SK-N-SH (cell line): ENCODE measurements at regions of chr5 and their contacts with region 1.

Region 1: DNA sequence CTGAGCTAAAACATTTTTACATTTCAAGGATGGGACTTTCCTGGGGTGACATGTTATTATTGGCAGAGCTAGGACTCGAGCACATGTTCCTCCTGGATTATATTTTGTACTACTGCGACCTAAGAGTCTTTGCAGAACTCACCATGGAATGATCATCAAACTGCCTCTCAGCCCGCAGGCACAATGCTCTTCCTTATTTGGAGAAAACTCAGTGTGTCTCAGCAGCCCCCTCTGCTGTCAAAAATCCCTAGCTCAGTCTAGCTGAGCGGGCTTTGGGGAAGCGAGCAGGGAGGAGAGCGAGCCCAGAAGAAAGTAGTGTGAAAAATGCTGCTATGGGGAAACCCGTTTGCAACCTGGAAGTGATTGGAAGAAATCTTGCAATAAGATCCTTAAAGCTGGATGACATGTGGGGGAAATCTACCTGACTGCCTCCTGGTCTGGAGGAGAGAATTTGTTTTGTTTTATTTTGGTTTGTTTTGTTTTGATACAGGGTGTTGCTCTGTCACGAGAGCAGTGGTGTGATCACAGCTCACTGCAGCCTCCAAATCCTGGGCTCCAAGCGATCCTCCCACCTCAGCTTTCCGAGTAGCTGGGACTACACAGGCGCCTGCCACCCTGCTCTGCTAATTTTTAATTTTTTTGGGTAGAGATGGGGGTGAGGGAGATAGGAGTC is 89.9 kb upstream of the CLINT1 start:
- DNase-seq: peak; percentile 77
- H3K4me3 ChIP-seq: peak overlapping the region in 1 of 2 experiments; percentile 1; a peak in 1 of 4 replicates
- H3K27ac ChIP-seq: no peak overlapping the region
- H3K4me1 ChIP-seq: no peaks in the 10 kb centered on the region; a peak in 1 of 4 replicates
- H3K27me3 ChIP-seq: no peaks in the 10 kb centered on the region
- CTCF ChIP-seq: peak; percentile 91
- EP300 ChIP-seq: no peak
- RAD21 ChIP-seq: peak; percentile 83

Region 2: DNA sequence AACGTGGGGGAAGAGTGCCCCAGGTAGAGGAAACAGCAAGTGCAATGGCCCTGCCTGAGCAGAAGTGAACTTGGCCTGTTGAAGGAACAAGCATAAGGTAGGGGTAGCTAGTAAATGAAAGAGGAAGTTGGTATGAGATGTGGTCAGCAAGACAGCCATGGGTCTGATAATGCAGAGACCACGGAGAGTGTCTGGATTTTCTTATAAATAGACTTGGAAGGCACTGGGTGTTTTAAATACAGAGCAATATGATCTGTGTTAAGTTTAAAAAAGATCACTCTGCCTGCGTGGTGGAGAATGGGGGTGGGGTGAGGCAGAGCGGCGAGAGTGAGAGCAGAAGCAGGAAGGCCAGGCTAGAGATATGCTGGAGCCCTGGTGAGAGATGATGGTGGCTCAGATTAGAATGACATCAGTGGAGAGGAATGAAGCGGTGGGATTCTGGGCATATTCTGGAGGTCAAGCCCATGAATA is 377.5 kb before region 1 on chr5:
- CTCF ChIA-PET with region 1: no interaction called
- POLR2A ChIA-PET with region 1: no interaction called
- DNase-seq: no peak
- H3K4me3 ChIP-seq: 0 out of 4 replicates have a peak overlapping the region, but pooled peaks of 1 of the 2 experiments have one; percentile 35
- H3K27ac ChIP-seq: peak overlapping the region; percentile 51 to 93
- H3K4me1 ChIP-seq: peaks cover 6 to 9% of the 10 kb centered on the region in 2 experiments; a peak in 3 of 4 replicates
- H3K27me3 ChIP-seq: no peaks in the 10 kb centered on the region
- CTCF ChIP-seq: no peak
- EP300 ChIP-seq: peak in 1 of 2 experiments; percentile 82; a peak in 1 of 4 replicates
- RAD21 ChIP-seq: no peak

Region 3: DNA sequence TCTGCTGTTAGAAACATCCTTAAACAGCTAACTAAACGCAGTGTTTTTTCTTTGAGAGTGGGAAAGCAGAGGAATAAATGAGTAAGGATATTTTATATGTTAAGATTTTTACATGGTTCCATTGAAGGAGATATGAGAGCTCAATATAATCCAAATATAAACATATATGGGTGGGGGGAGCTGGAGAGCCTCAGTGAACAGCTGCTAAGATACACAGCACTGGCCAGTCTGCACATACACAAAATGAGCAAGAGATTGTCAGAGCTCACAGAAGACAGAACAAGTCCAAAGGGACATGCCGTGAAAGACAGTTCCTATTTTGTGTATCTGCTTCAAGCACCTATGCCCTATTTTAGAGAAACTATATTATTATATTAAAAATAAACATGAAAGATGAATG is 136.8 kb before region 1 on chr5:
- CTCF ChIA-PET with region 1: interaction called, 22 read pairs
- POLR2A ChIA-PET with region 1: no interaction called
- DNase-seq: no peak
- H3K4me3 ChIP-seq: no peak overlapping the region
- H3K27ac ChIP-seq: no peak overlapping the region
- H3K4me1 ChIP-seq: no peaks in the 10 kb centered on the region; a peak in 2 of 4 replicates
- H3K27me3 ChIP-seq: no peaks in the 10 kb centered on the region
- CTCF ChIP-seq: no peak
- EP300 ChIP-seq: no peak
- RAD21 ChIP-seq: no peak

Region 4: DNA sequence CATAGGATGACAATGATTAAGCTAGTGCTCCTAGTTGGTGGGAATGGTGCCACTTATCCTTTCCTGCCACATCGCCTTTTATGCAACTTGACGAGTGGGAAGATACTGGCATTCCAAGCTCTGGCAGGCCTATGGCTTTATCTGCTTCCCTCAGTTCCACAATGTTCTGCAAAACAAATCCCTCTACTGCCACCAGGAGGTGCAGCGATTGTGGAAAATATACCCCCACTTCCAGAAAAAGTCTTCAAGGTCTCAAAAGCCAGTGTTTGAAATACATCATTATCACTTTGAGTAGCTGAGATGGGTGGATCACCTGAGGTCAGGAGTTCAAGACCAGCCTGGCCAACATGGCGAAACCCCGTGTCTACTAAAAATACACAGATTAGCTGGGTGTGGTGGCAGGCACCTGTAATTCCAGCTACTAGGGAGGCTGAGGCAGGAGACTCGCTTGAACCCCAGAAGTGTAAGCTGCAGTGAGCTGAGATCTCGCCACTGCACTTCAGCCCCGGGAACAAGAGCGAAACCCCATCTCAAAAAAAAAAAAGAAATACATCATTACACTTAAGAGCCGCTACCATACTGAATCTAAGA is 93.4 kb before region 1 on chr5:
- CTCF ChIA-PET with region 1: interaction called, 81 read pairs
- POLR2A ChIA-PET with region 1: no interaction called
- DNase-seq: peak; percentile 70
- H3K4me3 ChIP-seq: no peak overlapping the region
- H3K27ac ChIP-seq: no peak overlapping the region
- H3K4me1 ChIP-seq: peaks cover 0 to 8% of the 10 kb centered on the region in 2 experiments; a peak in 2 of 4 replicates
- H3K27me3 ChIP-seq: no peaks in the 10 kb centered on the region
- CTCF ChIP-seq: peak; percentile 71
- EP300 ChIP-seq: no peak
- RAD21 ChIP-seq: peak; percentile 71

Region 5: GRCh38 chr5:157934600-157934999 is 14.3 kb before region 1 on chr5:
- CTCF ChIA-PET with region 1: interaction called, 36 read pairs
- POLR2A ChIA-PET with region 1: no interaction called
- DNase-seq: no peak
- H3K4me3 ChIP-seq: no peak overlapping the region
- H3K27ac ChIP-seq: no peak overlapping the region
- H3K4me1 ChIP-seq: no peaks in the 10 kb centered on the region
- H3K27me3 ChIP-seq: no peaks in the 10 kb centered on the region
- CTCF ChIP-seq: no peak
- EP300 ChIP-seq: no peak
- RAD21 ChIP-seq: no peak

Region 6: DNA sequence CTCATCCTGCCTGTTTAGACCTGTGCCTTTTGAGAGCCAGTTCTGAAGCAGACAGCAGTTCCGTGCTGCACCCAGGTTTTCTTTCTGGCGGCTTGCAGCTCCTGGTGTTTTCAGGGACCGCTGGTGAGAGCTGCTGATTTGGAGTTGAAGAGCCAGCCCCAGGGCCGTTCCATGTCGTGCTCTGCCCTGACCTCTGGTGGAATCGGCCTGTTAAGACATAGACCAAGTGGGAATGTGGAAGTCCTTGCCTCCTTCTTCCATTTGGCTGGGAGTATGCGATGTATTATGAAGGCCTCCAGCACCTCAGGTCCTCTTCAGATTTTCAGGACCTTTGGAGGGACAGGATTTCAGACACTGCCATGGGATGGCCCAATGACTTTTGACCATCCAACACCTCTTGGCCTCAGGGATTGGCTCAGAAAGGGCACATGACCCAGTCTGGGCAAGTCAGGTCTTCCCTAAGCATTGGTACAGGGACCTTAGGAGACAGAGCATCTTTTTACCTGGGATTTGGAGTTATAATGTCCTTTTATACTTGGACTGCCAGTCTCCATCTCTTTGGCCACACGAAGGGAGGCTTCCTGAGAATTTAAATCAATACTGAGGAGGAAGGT is 46.1 kb after region 1 on chr5:
- CTCF ChIA-PET with region 1: interaction called, 18 read pairs
- POLR2A ChIA-PET with region 1: interaction called, 3 read pairs
- DNase-seq: peak; percentile 78
- H3K4me3 ChIP-seq: no peak overlapping the region
- H3K27ac ChIP-seq: no peak overlapping the region
- H3K4me1 ChIP-seq: no peaks in the 10 kb centered on the region
- H3K27me3 ChIP-seq: no peaks in the 10 kb centered on the region
- CTCF ChIP-seq: peak; percentile 71
- EP300 ChIP-seq: no peak
- RAD21 ChIP-seq: peak; percentile 84

Region 7: GRCh38 chr5:158349987-158350386 is 401.1 kb after region 1 on chr5:
- CTCF ChIA-PET with region 1: no interaction called
- POLR2A ChIA-PET with region 1: no interaction called
- DNase-seq: peak; percentile 15
- H3K4me3 ChIP-seq: no peak overlapping the region
- H3K27ac ChIP-seq: no peak overlapping the region; a peak in 1 of 4 replicates
- H3K4me1 ChIP-seq: peaks cover 0 to 3% of the 10 kb centered on the region in 2 experiments; a peak in 1 of 4 replicates
- H3K27me3 ChIP-seq: no peaks in the 10 kb centered on the region
- CTCF ChIP-seq: no peak
- EP300 ChIP-seq: no peak
- RAD21 ChIP-seq: no peak